Dendritic cell treated with granulocyte-macrophage colony-stimulating factor and Interleukin-4, amounts not matched to agents 40 ng/mL and 50 ng/mL, for 4 days (primary cell): ENCODE measurements at regions of chr2 and their contacts with region 1.

Region 1: DNA sequence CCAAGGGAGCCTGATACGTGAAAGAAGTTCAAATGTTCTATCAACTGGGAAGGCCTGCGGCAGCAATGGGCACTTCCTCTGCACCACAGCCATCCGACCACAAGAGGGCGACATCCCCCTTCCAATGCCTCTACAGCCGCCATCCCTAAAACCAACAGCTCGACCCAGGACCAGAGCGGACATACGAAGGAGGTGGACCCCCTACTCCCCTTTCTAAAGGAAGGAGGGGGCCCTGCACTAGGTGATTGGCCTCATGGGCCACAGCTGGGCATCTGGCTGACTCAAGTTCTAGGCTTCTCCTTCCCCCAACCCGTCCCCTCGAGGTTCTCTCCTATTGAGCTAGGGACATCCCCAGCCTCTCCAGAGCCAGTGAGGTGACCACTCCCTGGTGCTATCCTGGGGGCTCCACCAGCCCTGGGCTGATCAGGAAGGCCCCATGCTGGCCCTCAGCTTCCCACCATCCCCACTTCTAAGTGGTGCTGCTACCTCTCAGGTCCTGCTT is 217.2 kb downstream of the TNS1 start:
- H3K4me3 Mint-ChIP-seq: no peak overlapping the region
- H3K27ac Mint-ChIP-seq: no peak overlapping the region
- H3K4me1 Mint-ChIP-seq: peaks cover 19% of the 10 kb centered on the region
- H3K27me3 Mint-ChIP-seq: peaks cover 28% of the 10 kb centered on the region

Region 2: DNA sequence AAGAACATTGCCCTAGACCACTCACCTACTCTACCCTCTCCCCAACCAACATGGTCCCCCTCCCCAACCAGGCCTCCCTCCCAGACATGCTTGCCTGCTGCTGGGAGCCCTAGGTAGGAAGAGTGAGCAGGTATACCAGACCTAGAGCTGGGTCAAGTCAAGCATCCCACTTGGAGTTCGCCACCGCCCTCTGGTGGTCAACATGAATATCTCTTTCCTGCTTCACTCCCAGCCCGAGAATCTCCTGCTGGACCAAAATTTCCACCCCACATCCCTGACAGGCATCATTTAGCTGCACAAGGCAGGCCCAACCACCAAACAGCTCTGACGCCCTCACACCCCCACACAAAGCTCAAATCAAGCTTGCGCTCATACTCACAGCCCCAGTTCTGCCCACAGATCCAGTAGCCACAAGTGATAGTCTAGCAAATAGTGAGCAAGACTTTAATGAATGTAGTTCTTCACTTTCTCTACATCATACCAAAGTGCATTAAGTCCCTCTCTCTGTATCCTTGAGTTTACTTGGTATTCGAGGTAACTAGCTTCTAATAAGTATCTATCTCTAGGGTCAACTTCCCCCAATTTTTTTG is 101.2 kb after region 1 on chr2:
- intact Hi-C with region 1: loop called (anchors 1 kb)
- H3K4me3 Mint-ChIP-seq: no peak overlapping the region
- H3K27ac Mint-ChIP-seq: no peak overlapping the region
- H3K4me1 Mint-ChIP-seq: peaks cover 24% of the 10 kb centered on the region
- H3K27me3 Mint-ChIP-seq: no peaks in the 10 kb centered on the region

Region 3: DNA sequence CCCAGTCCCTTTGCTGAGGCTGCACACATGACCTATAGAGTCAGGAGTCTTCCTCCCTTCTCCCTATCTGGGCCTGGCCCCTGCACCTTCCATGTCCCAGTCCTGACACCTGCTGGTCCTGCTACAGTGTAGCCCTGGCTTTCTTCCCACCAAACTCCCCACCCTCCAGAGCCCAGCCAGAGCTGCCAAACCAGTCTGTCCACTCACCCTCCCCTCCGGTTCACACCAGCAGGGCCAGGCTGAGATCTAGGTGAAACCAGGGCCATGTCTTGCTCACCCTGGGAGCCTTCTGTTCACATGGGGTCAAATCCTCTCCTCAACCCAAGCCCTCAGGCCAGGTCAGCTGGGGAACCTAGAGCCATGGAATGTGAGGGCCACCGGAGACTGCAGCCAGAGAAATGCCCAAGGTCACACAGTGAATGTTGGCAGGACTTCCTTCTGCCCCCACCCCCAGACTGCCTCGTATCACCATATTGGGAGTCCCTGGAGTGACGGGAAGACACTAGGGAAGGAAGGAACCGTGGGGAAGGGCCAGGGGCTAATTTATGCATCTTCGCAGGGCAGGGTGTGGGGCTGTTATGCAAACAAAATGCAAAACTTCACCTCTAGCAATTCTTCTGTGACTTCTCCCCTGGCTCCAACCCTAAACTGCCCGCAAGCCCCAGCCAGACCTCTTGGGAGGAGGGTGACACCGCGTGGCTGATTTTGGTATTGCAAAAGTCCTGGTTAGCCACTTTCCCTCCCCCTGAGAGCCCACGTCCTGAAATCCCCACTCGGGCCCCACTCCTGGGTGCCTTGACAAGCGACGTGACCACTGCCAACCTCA is 202.6 kb after region 1 on chr2:
- intact Hi-C with region 1: loop called (anchors 1 kb)
- H3K4me3 Mint-ChIP-seq: no peak overlapping the region
- H3K27ac Mint-ChIP-seq: no peak overlapping the region
- H3K4me1 Mint-ChIP-seq: no peaks in the 10 kb centered on the region
- H3K27me3 Mint-ChIP-seq: peaks cover 1% of the 10 kb centered on the region

Region 4: DNA sequence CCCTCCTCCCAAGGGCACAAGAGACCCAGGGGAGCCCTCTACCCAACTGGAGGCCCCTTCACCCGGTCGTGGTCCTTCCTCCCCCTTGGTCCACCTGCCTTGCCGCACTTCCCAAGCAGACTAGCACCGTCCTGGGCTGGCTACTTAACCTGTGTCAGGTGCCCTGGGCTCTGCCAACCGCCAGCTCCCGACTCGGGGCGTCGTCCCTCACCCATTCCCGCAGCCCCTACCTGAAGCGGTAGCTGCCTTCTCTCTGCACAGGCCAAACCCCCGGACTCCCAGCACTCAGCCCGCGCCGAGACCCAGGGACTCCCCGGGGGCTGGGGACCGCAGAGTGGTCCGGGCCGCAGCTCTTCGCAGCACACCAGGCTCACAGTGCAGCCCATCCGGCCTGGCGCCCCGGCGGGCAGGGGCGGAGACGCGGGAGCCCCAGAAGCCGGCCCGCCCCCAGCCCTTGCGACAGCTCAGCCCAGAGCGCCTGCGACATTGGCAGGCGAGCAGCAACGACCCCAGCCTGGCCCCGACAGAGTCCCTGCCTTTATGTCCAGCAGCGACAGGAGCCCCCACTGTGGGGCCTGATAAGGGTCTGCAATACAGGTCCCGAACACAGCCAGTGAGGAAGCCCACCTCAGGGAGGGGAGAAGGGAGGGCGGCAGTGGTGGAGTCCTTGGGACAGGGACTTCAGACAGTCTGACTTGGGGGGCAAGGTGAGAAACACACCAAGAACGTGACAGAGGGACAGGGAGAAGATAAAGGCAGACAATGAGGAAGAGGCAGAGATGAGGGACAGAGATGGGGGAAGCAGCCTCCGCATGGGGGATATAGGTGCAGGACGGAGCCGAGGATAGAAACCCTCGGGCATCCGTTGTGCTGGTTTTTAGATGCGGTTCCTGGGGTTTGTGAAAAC is 248.2 kb after region 1 on chr2:
- intact Hi-C with region 1: loop called (anchors 1 kb)
- H3K4me3 Mint-ChIP-seq: peak overlapping the region; percentile 75
- H3K27ac Mint-ChIP-seq: peak overlapping the region; percentile 83
- H3K4me1 Mint-ChIP-seq: peaks cover 44% of the 10 kb centered on the region
- H3K27me3 Mint-ChIP-seq: peaks cover 9% of the 10 kb centered on the region

Region 5: DNA sequence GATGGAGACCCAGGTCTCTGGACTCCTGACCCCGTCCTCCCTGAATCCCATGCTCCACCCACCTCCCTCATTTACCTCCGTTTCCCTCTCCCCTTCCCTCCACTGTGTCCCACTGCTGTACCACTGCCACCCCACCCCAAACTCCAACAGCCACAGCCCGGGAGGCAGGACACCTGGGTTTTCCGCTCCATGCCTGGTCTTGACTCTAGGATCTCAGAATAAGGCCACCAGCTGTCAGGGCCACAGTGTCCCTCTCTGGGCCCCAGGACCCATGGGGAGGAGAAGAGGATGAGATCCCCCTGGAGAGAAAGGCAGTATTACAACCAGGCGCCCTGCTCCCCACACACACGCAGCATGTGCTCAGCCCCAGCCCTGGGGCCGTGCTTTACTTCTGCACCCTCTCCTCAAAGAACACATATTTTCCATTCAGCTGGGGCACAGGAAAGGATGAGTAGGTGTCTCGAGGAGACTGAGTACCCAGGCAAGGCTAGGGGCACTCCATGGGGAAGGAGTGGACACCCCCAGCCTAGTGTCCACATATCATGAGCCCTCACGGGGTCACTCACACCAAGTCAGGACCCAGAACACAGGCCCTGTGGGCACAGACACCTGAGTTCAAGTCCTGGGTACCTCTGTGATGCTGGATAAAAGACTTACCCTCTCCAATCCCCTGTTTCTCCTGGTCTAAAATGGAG is 284.2 kb after region 1 on chr2:
- intact Hi-C with region 1: loop called (anchors 2 kb)
- H3K4me3 Mint-ChIP-seq: peak overlapping the region; percentile 78
- H3K27ac Mint-ChIP-seq: peak overlapping the region; percentile 93
- H3K4me1 Mint-ChIP-seq: peaks cover 95% of the 10 kb centered on the region
- H3K27me3 Mint-ChIP-seq: no peaks in the 10 kb centered on the region